Activated T-helper 2 cell treated with anti-CD3 and anti-CD28 coated beads, Interferon-gamma antibody, Interleukin-2, Interleukin-4, amounts not matched to agents 10 μg/mL and 5 μg/mL and 100 μg/mL, durations not matched to agents 14 hours and 24 hours and 36 hours (primary cell): ENCODE measurements at regions of chr7 and their contacts with region 1.

Region 1: DNA sequence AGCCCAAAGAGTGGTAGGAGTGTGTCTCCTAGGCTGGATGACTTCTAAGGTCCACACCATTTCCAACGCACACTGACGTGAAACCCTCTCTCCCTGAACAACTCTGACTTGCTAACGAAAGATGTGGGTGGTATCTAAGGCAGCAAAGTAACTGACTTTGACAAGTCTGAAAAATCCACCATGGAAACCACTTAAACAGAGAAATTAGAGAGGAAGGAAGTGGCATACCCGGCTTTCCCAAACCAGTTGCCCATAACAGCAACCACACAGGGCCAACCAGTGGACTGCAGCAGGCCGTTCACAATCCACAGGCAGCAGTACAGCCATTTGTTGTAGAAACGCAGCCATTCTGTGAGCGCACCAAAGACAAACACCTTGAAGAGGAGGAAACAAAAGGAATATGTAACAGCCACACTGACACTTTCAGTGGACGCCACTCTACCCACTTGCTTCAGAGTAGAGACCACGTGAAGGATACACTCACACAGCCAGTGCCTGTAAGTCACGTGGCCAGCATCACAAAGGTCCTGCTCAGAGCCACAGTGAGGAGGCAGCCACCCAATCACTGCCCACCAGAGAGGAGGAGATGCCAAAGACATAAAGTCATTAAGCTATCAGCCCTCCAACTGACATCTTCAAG is 39.8 kb downstream of the SLC37A3 start:
- DNase-seq: peak; percentile 16
- H3K4me3 Mint-ChIP-seq: peak overlapping the region; percentile 62
- H3K27ac Mint-ChIP-seq: peak overlapping the region; percentile 97
- H3K4me1 Mint-ChIP-seq: peaks cover 29% of the 10 kb centered on the region
- H3K27me3 Mint-ChIP-seq: no peaks in the 10 kb centered on the region

Region 2: GRCh38 chr7:140439359-140439758 is 80.8 kb after region 1 on chr7:
- intact Hi-C with region 1: loop called (anchors 2 kb)
- DNase-seq: no peak
- H3K4me3 Mint-ChIP-seq: no peak overlapping the region
- H3K27ac Mint-ChIP-seq: peak overlapping the region; percentile 58
- H3K4me1 Mint-ChIP-seq: peaks cover 9% of the 10 kb centered on the region
- H3K27me3 Mint-ChIP-seq: no peaks in the 10 kb centered on the region